SK-N-SH (cell line): ENCODE measurements at regions of chr1 and their contacts with region 1.

Region 1: GRCh38 chr1:99685516-99686180 is 39.7 kb downstream of the PALMD start:
- DNase-seq: peak; percentile 44
- H3K4me3 ChIP-seq: no peak overlapping the region
- H3K27ac ChIP-seq: peak overlapping the region in 1 of 2 experiments; percentile 45; a peak in 2 of 4 replicates
- H3K4me1 ChIP-seq: peaks cover 5% of the 10 kb centered on the region in 2 experiments
- H3K27me3 ChIP-seq: no peaks in the 10 kb centered on the region
- CTCF ChIP-seq: peak; percentile 75
- EP300 ChIP-seq: no peak
- RAD21 ChIP-seq: peak; percentile 68

Region 2: DNA sequence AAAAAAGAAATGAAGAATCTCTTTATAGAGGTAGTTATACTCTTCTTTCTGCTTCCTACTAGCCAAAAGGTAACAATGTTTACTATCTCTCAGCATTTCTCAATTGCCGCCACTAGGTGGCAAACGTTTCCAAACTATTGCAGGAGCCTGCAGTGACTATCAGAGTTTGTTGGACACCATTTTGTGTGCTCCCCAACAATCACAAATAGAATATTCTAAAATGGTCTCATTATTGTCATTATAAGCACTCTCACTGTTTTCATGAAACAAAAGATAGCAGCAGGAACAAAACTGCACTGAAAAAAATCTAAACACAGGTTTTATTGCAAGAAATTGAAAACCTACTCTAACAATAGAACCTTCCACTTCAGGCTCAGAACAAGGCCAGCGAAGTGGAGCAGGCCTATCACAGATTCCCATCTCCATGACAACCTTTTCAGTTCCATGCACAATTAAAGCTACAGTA is 505.3 kb before region 1 on chr1:
- CTCF ChIA-PET with region 1: interaction called, 14 read pairs
- POLR2A ChIA-PET with region 1: interaction called, 3 read pairs
- DNase-seq: peak; percentile 25
- H3K4me3 ChIP-seq: no peak overlapping the region
- H3K27ac ChIP-seq: peak overlapping the region; percentile 63 to 98; a peak in 3 of 4 replicates
- H3K4me1 ChIP-seq: peaks cover 11 to 26% of the 10 kb centered on the region in 2 experiments
- H3K27me3 ChIP-seq: no peaks in the 10 kb centered on the region
- CTCF ChIP-seq: peak; percentile 89
- EP300 ChIP-seq: no peak
- RAD21 ChIP-seq: peak; percentile 96

Region 3: DNA sequence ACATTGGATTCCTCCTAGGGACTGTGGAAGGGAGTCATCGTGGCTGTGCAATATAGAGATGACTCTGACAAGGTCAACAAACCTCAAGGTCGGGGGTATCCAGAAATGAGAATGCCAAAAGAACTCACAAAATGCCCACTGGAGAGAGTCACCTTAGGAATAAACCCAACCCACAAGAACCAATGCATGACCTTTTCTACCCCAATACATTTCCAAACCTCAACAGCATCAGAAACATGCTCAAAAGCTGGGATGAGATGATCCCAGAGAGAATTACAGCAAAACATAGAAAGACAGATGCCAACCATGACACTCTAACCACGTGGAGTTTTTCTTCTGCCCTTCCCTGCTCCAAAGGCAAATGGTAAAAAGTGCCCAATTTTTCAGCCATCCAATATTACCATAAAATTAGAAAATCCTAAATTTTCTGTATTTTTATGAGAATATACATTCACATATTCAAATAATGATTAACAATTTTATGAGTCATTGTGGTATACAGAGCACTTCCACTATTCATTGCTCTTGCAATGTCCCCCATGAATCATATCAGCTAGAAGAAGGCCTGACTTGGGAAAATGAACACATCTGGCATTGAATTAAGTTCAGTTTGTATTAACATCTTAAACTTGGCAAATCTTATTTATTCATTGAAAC is 128.0 kb before region 1 on chr1:
- CTCF ChIA-PET with region 1: no interaction called
- POLR2A ChIA-PET with region 1: no interaction called
- DNase-seq: no peak
- H3K4me3 ChIP-seq: no peak overlapping the region
- H3K27ac ChIP-seq: peak overlapping the region in 1 of 2 experiments; percentile 94; a peak in 2 of 4 replicates
- H3K4me1 ChIP-seq: peaks cover 0 to 14% of the 10 kb centered on the region in 2 experiments; a peak in 1 of 4 replicates
- H3K27me3 ChIP-seq: no peaks in the 10 kb centered on the region
- CTCF ChIP-seq: no peak
- EP300 ChIP-seq: peak in 1 of 2 experiments; percentile 46; a peak in 1 of 4 replicates
- RAD21 ChIP-seq: no peak

Region 4: GRCh38 chr1:99672500-99673213 is 13.0 kb before region 1 on chr1:
- CTCF ChIA-PET with region 1: interaction called, 21 read pairs
- POLR2A ChIA-PET with region 1: no interaction called
- DNase-seq: no peak
- H3K4me3 ChIP-seq: no peak overlapping the region
- H3K27ac ChIP-seq: peak overlapping the region in 1 of 2 experiments; percentile 44; a peak in 2 of 4 replicates
- H3K4me1 ChIP-seq: peaks cover 4 to 8% of the 10 kb centered on the region in 2 experiments; a peak in 3 of 4 replicates
- H3K27me3 ChIP-seq: no peaks in the 10 kb centered on the region
- CTCF ChIP-seq: no peak
- EP300 ChIP-seq: no peak
- RAD21 ChIP-seq: no peak

Region 5: DNA sequence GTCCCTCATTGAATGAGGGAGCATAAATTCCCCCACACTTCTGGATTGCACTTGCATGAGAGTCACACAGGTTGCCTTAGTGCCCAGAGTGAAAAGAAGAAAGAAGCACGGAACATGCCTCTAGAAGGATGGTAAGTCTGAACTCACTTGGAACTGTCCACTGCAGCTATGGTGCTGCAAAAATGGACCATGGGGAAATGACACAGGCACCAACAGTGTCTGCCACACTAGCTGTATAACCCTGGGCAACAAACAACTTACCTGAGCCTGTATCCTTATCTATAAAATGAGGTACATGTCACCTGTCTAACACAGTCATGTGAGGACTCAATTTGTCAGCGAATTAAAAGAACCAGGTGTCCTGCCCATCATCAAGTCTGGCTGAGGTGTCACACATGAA is 11.0 kb after region 1 on chr1:
- CTCF ChIA-PET with region 1: interaction called, 22 read pairs
- POLR2A ChIA-PET with region 1: no interaction called
- DNase-seq: no peak
- H3K4me3 ChIP-seq: no peak overlapping the region
- H3K27ac ChIP-seq: no peak overlapping the region
- H3K4me1 ChIP-seq: no peaks in the 10 kb centered on the region
- H3K27me3 ChIP-seq: no peaks in the 10 kb centered on the region
- CTCF ChIP-seq: no peak
- EP300 ChIP-seq: no peak
- RAD21 ChIP-seq: no peak